Naive thymus-derived CD8-positive, alpha-beta T cell (primary cell): ENCODE measurements at regions of chr5 and their contacts with region 1.

Region 1: DNA sequence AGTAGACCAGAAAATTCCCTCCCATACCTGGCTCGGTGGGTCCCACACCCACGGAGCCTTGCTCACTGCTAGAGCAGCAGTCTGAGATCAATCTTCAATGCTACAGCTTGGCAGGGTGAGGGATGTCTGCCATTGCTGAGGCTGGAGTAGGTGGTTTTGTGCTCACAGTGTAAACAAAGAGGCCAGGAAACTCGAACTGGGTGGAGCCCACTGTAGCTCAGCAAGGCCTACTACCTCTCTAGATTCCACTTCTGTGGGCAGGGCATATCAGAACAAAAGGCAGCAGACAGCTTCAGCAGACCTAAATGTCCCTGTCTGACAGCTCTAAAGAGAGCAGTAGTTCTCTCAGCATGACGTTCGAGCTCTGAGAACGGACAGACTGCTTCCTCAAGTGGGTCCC is 5.6 kb upstream of the GZMA start:
- DNase-seq: peak in 9 of 10 donors; percentile 4 to 81 (median 60)
- ATAC-seq: peak; percentile 80 to 87
- H3K4me3 Mint-ChIP-seq: peak overlapping the region; percentile 44 to 87 (median 72)
- H3K27ac Mint-ChIP-seq: peak overlapping the region; percentile 76 to 98 (median 90)
- H3K4me1 Mint-ChIP-seq: peaks cover 48 to 96% (median 87%) of the 10 kb centered on the region in 4 donors
- H3K27me3 Mint-ChIP-seq: no peaks in the 10 kb centered on the region

Region 2: DNA sequence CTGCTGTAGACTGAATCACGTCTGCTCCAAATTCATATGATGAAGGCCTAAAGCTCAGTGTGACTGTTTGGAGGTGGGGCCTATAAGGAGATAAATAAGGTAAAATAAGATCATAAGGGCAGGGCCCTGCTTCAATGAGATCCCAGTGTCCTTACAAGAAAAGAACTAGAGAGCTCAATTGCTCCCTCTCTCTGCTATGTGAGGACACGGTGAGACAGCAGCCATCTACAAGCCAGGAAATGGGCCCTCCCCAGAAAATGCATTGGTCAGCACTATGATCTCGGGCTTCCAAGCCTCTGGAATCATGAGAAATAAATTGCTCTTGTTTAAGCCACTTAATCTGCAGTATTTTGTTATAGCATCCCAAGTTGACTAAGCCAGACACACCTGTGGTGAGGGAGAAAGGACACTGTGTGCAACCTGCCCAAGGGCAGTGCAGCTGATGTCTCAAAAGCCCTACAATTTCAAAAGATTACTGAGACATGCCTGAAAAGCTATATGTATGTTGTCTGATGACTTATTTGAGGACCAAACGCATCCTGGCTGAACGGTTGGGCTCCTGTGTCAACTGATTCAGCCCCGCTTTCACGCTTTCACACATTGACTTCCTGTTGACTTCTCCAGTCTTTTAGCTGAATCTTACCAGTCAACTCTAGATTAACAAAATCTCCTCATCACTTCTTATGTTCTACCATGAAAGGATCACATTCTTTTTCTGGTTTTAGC is 59.7 kb before region 1 on chr5:
- POLR2A ChIA-PET with region 1: interaction called, 23 read pairs
- DNase-seq: peak in 8 of 10 donors; percentile 14 to 69 (median 42)
- ATAC-seq: peak; percentile 90 to 92
- H3K4me3 Mint-ChIP-seq: peak overlapping the region in 9 of 10 donors; percentile 0 to 57 (median 41)
- H3K27ac Mint-ChIP-seq: peak overlapping the region; percentile 35 to 98 (median 84)
- H3K4me1 Mint-ChIP-seq: peaks cover 10 to 31% (median 26%) of the 10 kb centered on the region in 4 donors
- H3K27me3 Mint-ChIP-seq: no peaks in the 10 kb centered on the region

Region 3: GRCh38 chr5:55062039-55062779 is 34.7 kb before region 1 on chr5:
- POLR2A ChIA-PET with region 1: interaction called, 20 read pairs
- DNase-seq: peak in 8 of 10 donors; percentile 13 to 60 (median 42)
- ATAC-seq: peak; percentile 79 to 84
- H3K4me3 Mint-ChIP-seq: peak overlapping the region; percentile 68 to 90 (median 80)
- H3K27ac Mint-ChIP-seq: peak overlapping the region; percentile 41 to 85 (median 70)
- H3K4me1 Mint-ChIP-seq: peaks cover 38 to 55% (median 52%) of the 10 kb centered on the region in 4 donors
- H3K27me3 Mint-ChIP-seq: no peaks in the 10 kb centered on the region

Region 4: GRCh38 chr5:55072666-55073065 is 24.2 kb before region 1 on chr5:
- POLR2A ChIA-PET with region 1: interaction called, 23 read pairs
- DNase-seq: peak in 4 of 10 donors; percentile 22 to 80 (median 66)
- ATAC-seq: peak; percentile 95 to 98
- H3K4me3 Mint-ChIP-seq: peak overlapping the region; percentile 31 to 71 (median 56)
- H3K27ac Mint-ChIP-seq: peak overlapping the region; percentile 8 to 88 (median 72)
- H3K4me1 Mint-ChIP-seq: peaks cover 19 to 42% (median 38%) of the 10 kb centered on the region in 4 donors
- H3K27me3 Mint-ChIP-seq: no peaks in the 10 kb centered on the region